ENCODE measurements at regions of chr6 and their contacts with region 1.

Region 1: GRCh38 chr6:121436960-121437850 is 1.8 kb downstream of the GJA1 start:
- DNase-seq: peak; percentile 82
- H3K4me3 ChIP-seq: peak overlapping the region; percentile 94 to 100 (median 100)
- H3K27ac ChIP-seq: peak overlapping the region; percentile 99
- H3K4me1 ChIP-seq: peaks cover 31% of the 10 kb centered on the region
- H3K27me3 ChIP-seq: no peaks in the 10 kb centered on the region
- CTCF ChIP-seq: no peak
- POLR2A ChIP-seq: peak; percentile 60

Region 2: GRCh38 chr6:121020656-121021055 is 416.5 kb before region 1 on chr6:
- CTCF ChIA-PET with region 1: no interaction called
- POLR2A ChIA-PET with region 1: no interaction called
- dilution Hi-C with region 1: no loop called
- intact Hi-C with region 1: no loop called
- DNase-seq: no peak
- H3K4me3 ChIP-seq: no peak overlapping the region
- H3K27ac ChIP-seq: no peak overlapping the region
- H3K4me1 ChIP-seq: no peaks in the 10 kb centered on the region
- H3K27me3 ChIP-seq: no peaks in the 10 kb centered on the region
- CTCF ChIP-seq: no peak
- POLR2A ChIP-seq: no peak

Region 3: GRCh38 chr6:121305957-121306607 is 131.1 kb before region 1 on chr6:
- CTCF ChIA-PET with region 1: no interaction called
- POLR2A ChIA-PET with region 1: no interaction called
- dilution Hi-C with region 1: no loop called
- intact Hi-C with region 1: no loop called
- DNase-seq: peak; percentile 54
- H3K4me3 ChIP-seq: no peak overlapping the region
- H3K27ac ChIP-seq: no peak overlapping the region
- H3K4me1 ChIP-seq: no peaks in the 10 kb centered on the region
- H3K27me3 ChIP-seq: no peaks in the 10 kb centered on the region
- CTCF ChIP-seq: peak; percentile 33 to 43
- POLR2A ChIP-seq: no peak

Region 4: DNA sequence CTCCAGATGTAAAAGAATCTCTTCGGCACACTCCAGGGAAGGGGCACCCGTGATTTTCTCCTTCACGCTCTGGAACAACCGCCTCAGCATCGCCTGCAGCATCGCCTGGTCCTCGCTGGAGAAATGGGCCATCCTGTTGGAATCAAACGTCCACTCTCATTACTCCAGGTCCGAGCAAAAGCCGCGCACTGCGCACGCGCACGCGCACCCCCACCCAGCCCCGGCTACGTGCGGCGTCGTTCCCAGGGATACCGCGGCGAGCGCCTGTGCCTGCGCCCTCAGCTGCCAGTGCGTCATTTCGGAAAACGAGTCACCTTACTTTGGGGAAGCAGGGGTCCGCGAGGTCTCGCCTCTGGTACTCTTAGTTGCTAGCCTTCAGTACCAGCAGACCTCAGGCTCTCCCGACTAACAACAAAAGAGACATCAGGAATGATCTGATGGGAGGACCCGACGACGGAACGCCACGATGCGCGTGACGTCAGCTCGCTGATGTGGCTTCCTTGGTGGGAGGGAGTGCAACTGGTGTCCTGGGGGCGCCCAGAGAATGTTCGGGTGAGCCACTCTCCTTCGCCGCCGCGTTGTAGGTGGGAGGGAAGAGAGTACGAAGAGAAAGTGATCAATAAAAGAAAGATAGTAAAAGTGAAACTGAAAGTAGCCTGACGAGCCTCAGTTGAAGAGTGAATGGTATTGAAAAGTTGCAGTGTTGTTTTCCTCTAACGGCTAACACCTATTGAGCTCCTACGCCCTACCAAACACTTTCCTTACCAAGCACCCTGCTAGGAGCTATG is 102.7 kb before region 1 on chr6 and contains the start of gene TBC1D32:
- CTCF ChIA-PET with region 1: interaction called, 3 read pairs
- POLR2A ChIA-PET with region 1: no interaction called
- dilution Hi-C with region 1: no loop called
- intact Hi-C with region 1: loop called (anchors 2 kb)
- DNase-seq: peak; percentile 95
- H3K4me3 ChIP-seq: peak within 1 kb of the TSS; percentile 82 to 99 (median 90)
- H3K27ac ChIP-seq: peak within 1 kb of the TSS; percentile 97
- H3K4me1 ChIP-seq: peaks cover 5% of the 10 kb centered on the region
- H3K27me3 ChIP-seq: no peaks in the 10 kb centered on the region
- CTCF ChIP-seq: no peak
- POLR2A ChIP-seq: peak; percentile 58
- total RNA-seq, gene TBC1D32: 4.0 and 4.3 TPM in 2 replicates

Region 5: DNA sequence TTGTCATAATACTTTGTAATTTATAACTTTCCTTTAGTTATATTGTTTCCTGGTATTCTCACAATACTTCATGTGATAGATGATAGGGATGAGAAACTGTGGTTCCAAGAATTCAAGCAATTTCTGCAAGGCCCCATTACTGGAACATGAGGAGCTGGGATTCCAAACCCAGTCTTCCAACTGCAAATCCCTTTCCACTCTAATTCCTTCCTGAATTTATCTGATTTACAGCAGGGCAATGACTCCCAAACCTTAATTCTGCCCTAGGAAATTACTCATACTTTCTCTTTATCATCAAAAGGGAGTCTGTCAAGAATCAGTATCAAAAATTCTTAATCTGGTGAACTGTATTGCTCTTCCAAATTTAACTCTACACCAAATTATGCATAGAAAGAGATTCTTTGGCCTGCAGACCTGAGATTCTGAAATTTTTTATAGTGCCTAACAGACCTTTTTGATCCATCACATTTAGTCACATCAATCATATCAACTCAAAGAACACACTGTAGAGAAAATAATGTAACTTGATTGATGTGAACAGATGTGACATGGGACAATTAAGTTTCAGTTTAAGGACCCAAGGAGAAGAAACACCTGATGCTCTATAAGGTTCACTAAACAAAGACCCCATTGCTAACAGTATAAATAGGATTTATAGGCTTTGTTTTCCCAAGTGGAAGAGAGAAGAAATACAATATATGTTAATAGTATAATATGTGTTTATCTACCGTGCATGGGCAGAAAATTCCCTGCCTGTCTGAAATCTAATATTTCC is 43.3 kb before region 1 on chr6:
- CTCF ChIA-PET with region 1: no interaction called
- POLR2A ChIA-PET with region 1: no interaction called
- dilution Hi-C with region 1: no loop called
- intact Hi-C with region 1: no loop called
- DNase-seq: no peak
- H3K4me3 ChIP-seq: no peak overlapping the region
- H3K27ac ChIP-seq: no peak overlapping the region
- H3K4me1 ChIP-seq: no peaks in the 10 kb centered on the region
- H3K27me3 ChIP-seq: no peaks in the 10 kb centered on the region
- CTCF ChIP-seq: no peak
- POLR2A ChIP-seq: no peak

Region 6: DNA sequence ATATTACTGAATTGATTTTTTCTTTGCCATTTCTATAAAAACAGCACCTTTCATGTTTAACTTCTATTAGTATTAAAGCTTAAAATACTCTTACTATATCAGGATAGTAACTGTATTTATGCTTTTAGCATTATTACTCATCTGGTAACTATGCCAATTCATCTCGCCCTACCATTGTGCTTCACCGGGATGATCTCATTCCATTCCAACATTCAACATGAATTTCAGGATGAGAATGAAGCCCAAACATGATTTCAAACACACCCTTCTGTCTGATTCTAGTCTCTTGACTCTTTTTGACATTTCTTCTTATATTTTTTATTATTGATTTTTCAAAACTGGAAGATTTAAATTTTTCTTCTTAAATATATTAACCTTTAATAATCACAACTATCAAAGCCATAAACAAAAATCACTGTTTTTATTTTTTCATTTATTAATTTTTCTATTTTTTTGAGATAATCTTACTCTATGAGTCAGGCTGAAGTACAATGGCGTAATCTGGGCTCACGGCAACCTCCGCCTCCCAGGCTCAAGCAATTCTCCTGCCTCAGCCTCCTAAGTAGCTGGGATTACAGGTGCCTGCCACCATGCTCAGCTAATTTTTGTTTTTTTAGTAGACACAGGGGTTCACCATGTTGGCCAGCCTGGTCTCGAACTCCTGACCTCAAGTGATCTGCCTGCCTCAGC is 44.9 kb after region 1 on chr6:
- CTCF ChIA-PET with region 1: no interaction called
- POLR2A ChIA-PET with region 1: interaction called, 3 read pairs
- dilution Hi-C with region 1: no loop called
- intact Hi-C with region 1: loop called (anchors 2 kb)
- DNase-seq: peak; percentile 89
- H3K4me3 ChIP-seq: no peak overlapping the region
- H3K27ac ChIP-seq: peak overlapping the region; percentile 72
- H3K4me1 ChIP-seq: peaks cover 9% of the 10 kb centered on the region
- H3K27me3 ChIP-seq: no peaks in the 10 kb centered on the region
- CTCF ChIP-seq: no peak
- POLR2A ChIP-seq: no peak

Region 7: DNA sequence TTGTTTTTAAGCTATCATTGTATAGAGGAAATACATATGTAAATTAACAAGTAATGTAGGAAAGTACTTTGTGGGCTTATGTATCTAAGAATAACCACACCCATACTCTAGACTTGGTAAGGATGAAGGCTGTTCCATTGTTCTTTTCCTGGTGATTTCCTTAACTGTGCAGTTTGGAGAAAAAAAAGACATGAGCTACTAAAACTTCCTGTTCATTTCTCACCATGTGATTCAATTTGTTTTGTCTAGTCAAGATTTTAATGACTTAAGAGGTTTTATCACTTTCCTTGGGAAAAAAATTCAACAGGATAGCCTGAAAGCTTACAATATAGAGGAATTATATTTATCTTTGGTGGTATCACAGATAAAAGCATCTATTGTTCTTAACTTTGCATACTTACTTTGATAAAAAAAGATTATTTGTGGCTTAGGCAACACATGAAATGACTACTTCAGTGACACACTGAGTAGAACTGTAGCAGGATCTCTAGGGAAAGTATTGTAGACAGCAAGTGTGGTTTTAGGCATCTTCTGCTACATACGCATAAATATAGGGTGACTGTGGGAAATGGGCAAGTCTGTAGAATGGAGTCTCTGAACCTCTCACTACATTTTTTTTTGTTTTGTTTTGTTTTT is 78.5 kb after region 1 on chr6:
- CTCF ChIA-PET with region 1: interaction called, 41 read pairs
- POLR2A ChIA-PET with region 1: interaction called, 94 read pairs
- dilution Hi-C with region 1: no loop called
- intact Hi-C with region 1: loop called (anchors 1 kb)
- DNase-seq: peak; percentile 93
- H3K4me3 ChIP-seq: no peak overlapping the region
- H3K27ac ChIP-seq: peak overlapping the region; percentile 90
- H3K4me1 ChIP-seq: peaks cover 46% of the 10 kb centered on the region
- H3K27me3 ChIP-seq: no peaks in the 10 kb centered on the region
- CTCF ChIP-seq: no peak
- POLR2A ChIP-seq: peak; percentile 36

Region 8: GRCh38 chr6:122033539-122034181 is 596.5 kb after region 1 on chr6:
- CTCF ChIA-PET with region 1: interaction called, 19 read pairs
- POLR2A ChIA-PET with region 1: no interaction called
- dilution Hi-C with region 1: no loop called
- intact Hi-C with region 1: loop called (anchors 1 kb)
- DNase-seq: peak; percentile 69
- H3K4me3 ChIP-seq: no peak overlapping the region
- H3K27ac ChIP-seq: no peak overlapping the region
- H3K4me1 ChIP-seq: no peaks in the 10 kb centered on the region
- H3K27me3 ChIP-seq: no peaks in the 10 kb centered on the region
- CTCF ChIP-seq: peak; percentile 35 to 51
- POLR2A ChIP-seq: no peak

Region 9: DNA sequence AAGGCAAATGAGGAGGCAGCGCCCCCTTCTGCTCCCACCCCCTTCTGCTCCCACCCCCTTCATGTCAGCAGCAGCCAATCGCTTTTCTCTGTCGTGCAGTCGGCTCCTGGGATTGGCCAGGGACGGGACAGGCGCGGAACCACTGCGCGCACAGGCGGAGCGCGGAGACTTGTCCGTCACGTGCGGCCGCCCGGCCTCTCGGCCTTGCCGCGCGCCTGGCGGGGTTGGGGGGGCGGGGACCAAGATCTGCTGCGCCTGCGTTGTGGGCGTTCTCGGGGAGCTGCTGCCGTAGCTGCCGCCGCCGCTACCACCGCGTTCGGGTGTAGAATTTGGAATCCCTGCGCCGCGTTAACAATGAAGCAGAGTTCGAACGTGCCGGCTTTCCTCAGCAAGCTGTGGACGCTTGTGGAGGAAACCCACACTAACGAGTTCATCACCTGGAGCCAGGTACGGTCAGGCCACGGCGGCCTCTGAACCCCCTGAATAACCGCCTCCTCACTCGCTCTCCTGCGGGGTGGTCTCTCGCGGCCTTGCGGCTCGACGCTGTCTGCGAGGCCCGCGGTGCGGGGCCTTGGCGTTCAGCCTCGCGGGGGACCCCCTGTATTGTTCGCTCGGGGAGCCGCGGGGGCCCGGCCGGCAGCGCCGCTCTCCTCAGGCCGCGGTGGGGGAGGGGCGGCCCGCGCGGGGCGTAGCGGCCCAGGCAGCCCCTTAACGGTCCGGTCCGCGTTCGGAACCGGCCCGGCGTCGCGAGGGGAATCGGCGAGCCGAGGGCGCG is 962.4 kb after region 1 on chr6 and contains the start of gene HSF2:
- CTCF ChIA-PET with region 1: no interaction called
- POLR2A ChIA-PET with region 1: no interaction called
- dilution Hi-C with region 1: no loop called
- intact Hi-C with region 1: loop called (anchors 5 kb)
- DNase-seq: peak; percentile 99
- H3K4me3 ChIP-seq: peak within 1 kb of the TSS; percentile 22 to 95 (median 77)
- H3K27ac ChIP-seq: peak within 1 kb of the TSS; percentile 48
- H3K4me1 ChIP-seq: peaks cover 11% of the 10 kb centered on the region
- H3K27me3 ChIP-seq: peaks cover under 1 to 2% of the 10 kb centered on the region in 2 experiments
- CTCF ChIP-seq: peak in 1 of 2 donors; percentile 48
- POLR2A ChIP-seq: peak; percentile 29
- total RNA-seq, gene HSF2: 8.0 and 10.1 TPM in 2 replicates

Region 10: GRCh38 chr6:122471107-122472021 is 1034.2 kb after region 1 on chr6 and contains the start of gene SERINC1:
- CTCF ChIA-PET with region 1: no interaction called
- POLR2A ChIA-PET with region 1: no interaction called
- dilution Hi-C with region 1: no loop called
- intact Hi-C with region 1: loop called (anchors 5 kb)
- DNase-seq: peak; percentile 97
- H3K4me3 ChIP-seq: peak within 1 kb of the TSS; percentile 83 to 98 (median 97)
- H3K27ac ChIP-seq: peak within 1 kb of the TSS; percentile 91
- H3K4me1 ChIP-seq: peaks cover 8% of the 10 kb centered on the region
- H3K27me3 ChIP-seq: no peaks in the 10 kb centered on the region
- CTCF ChIP-seq: no peak
- POLR2A ChIP-seq: peak; percentile 82
- total RNA-seq, gene SERINC1: 76.5 and 82.0 TPM in 2 replicates